Natural killer cell (primary cell): ENCODE measurements at regions of chr2 and their contacts with region 1.

Region 1: DNA sequence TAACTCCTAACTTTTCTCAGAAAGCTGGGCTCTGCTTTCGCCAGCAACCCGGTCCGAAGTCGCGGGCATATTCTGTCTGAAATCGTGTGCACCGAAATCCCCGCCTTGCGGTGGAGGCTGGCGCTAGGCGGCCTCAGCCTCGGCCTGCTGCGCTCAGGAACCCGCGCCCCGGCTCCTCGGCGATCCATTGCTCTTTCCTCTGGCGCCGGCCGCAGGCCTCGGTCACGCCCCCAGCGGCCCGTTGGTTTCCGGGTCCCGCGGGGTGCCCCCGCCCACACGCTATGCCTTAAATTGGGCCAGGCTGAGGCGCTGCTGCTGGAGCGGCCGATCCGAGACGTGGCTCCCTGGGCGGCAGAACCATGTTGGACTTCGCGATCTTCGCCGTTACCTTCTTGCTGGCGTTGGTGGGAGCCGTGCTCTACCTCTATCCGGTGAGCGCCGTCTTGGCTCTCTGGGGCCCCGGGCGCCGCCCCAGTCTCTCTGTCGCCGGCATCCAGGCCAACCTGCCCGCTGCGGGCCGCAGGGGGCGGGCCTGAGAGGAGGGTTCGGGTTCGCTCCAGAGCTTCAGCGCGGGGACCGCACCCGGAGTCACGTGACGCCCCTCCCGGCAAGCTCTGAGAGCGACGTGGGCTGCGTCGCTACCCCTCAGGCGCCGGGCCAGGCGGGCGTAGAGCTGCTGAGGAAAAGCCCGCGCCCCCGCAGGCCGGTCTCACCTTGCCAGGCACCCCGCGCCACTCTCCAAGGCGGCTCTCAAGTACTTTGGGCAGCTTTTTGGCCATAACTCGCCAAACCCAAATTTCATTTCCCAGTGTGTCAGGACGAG is at the start of gene CYP20A1:
- DNase-seq: peak; percentile 97 to 98
- ATAC-seq: peak; percentile 79 to 93 (median 83)
- H3K4me3 ChIP-seq: peak within 1 kb of the TSS; percentile 92
- H3K4me3 Mint-ChIP-seq: peak within 1 kb of the TSS; percentile 100
- H3K27ac ChIP-seq: peak within 1 kb of the TSS; percentile 96
- H3K27ac Mint-ChIP-seq: peak within 1 kb of the TSS; percentile 90 to 100
- H3K4me1 ChIP-seq: peaks cover 19% of the 10 kb centered on the region
- H3K4me1 Mint-ChIP-seq: peaks cover 29 to 41% of the 10 kb centered on the region in 2 donors
- H3K27me3 ChIP-seq: no peaks in the 10 kb centered on the region
- H3K27me3 Mint-ChIP-seq: no peaks in the 10 kb centered on the region
- CTCF ChIP-seq: no peak
- total RNA-seq, gene CYP20A1: 19.8 to 31.9 (median 30.7) TPM

Region 2: DNA sequence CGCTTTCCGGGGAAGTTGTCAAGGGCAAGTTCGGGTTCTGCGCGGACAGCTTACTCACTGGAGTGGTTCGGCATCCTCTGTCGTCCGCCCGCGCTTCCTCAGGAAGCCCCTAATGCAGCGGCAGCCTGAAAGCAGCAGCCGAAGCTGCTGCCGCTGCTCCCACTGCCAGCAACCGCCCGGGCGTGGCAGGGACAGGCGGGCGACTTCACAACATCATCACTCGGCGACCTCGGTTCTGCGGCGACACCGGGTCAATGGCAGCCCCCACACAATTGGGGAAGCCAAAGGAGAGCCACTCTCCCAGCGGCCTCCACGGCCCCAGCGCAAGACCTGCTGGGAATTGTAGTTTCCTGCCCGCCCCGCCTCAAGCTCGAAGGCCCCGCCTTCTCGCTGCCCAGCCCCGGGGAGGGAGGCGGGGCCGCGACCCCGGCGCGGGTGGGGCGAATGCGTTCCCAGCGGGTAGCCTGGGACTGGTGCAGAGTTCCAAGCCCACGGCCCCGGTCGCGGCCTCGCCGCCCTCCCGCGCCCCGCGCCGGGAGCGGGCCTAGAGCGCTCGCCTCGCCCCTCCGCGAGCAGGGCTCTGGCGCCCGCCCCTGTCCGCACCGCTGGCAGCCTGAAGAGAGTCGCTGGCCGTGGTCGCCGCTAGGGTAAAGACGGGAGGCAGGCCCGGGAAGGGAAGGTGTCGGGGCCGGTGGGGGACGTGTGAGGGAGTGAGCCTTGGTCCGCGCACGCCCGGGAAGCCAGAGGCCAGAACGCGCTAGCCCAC is 1787.4 kb before region 1 on chr2 and contains the starts of genes STRADB and TRAK2:
- intact Hi-C with region 1: loop called (anchors 5 kb)
- DNase-seq: peak; percentile 92 to 97
- ATAC-seq: peak; percentile 93 to 98 (median 93)
- H3K4me3 ChIP-seq: peak within 1 kb of the TSS; percentile 65
- H3K4me3 Mint-ChIP-seq: peak within 1 kb of the TSS; percentile 98
- H3K27ac ChIP-seq: peak within 1 kb of the TSS; percentile 72
- H3K27ac Mint-ChIP-seq: peak within 1 kb of the TSS; percentile 95 to 99
- H3K4me1 ChIP-seq: peaks cover 10% of the 10 kb centered on the region
- H3K4me1 Mint-ChIP-seq: peaks cover 29 to 38% of the 10 kb centered on the region in 2 donors
- H3K27me3 ChIP-seq: no peaks in the 10 kb centered on the region
- H3K27me3 Mint-ChIP-seq: no peaks in the 10 kb centered on the region
- CTCF ChIP-seq: peak; percentile 18
- total RNA-seq, gene STRADB: 11.8 to 15.3 (median 14.7) TPM
- total RNA-seq, gene TRAK2: 19.2 to 29.4 (median 26.2) TPM

Region 3: GRCh38 chr2:202375609-202376408 is 863.1 kb before region 1 on chr2 and contains the start of gene BMPR2:
- intact Hi-C with region 1: loop called (anchors 5 kb)
- DNase-seq: peak; percentile 79 to 90
- ATAC-seq: peak; percentile 78 to 84 (median 82)
- H3K4me3 ChIP-seq: peak within 1 kb of the TSS; percentile 72
- H3K4me3 Mint-ChIP-seq: peak within 1 kb of the TSS; percentile 93
- H3K27ac ChIP-seq: peak within 1 kb of the TSS; percentile 49
- H3K27ac Mint-ChIP-seq: peak within 1 kb of the TSS; percentile 72 to 73
- H3K4me1 ChIP-seq: peaks cover 12% of the 10 kb centered on the region
- H3K4me1 Mint-ChIP-seq: peaks cover 39 to 43% of the 10 kb centered on the region in 2 donors
- H3K27me3 ChIP-seq: no peaks in the 10 kb centered on the region
- H3K27me3 Mint-ChIP-seq: no peaks in the 10 kb centered on the region
- CTCF ChIP-seq: no peak
- total RNA-seq, gene BMPR2: 17.8 to 25.5 (median 23.2) TPM

Region 4: DNA sequence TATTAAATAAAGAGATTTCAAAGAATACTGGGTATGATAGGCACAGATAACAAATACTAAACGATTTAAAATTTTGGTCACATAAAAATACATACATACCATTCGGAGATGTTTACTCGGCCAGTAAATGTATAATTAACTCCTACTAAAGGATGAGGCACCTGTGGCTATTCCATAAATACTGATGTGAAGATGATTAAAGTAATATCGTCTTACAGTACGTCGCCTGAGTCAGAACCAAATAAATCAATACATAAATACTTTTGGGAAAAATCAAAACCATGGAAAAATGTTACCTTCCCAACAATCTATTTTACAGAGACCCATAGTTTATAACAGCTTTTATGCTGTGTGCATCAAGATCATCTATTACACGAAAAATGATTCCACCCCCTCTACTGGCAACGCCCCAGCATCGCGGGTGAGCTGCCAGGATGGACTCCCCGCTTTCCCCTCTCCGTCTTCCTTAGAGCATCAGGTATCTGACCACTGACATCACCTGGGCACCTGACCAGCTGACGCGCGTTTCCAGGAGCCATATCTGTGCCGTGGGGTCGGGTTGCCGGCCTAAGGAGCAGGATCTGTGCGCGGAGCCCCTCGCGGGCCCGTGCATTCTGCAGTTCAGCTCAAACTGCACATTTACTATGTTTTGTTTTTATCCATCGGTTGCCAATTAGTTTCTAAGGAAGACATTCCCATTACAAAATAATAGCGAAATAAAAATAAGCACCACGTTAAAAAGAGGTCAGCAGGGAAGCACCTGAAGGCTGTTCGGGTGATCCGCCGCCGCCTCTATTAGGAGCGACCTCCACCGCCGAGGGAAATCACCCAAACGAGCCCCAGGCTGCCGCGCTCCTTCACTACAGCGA is 368.2 kb before region 1 on chr2:
- intact Hi-C with region 1: no loop called
- DNase-seq: peak; percentile 50 to 76
- ATAC-seq: peak; percentile 82 to 89 (median 86)
- H3K4me3 ChIP-seq: peak overlapping the region; percentile 83
- H3K4me3 Mint-ChIP-seq: peak overlapping the region; percentile 91
- H3K27ac ChIP-seq: peak overlapping the region; percentile 74
- H3K27ac Mint-ChIP-seq: peak overlapping the region; percentile 73 to 82
- H3K4me1 ChIP-seq: peaks cover 7% of the 10 kb centered on the region
- H3K4me1 Mint-ChIP-seq: peaks cover 8 to 13% of the 10 kb centered on the region in 2 donors
- H3K27me3 ChIP-seq: no peaks in the 10 kb centered on the region
- H3K27me3 Mint-ChIP-seq: no peaks in the 10 kb centered on the region
- CTCF ChIP-seq: peak; percentile 64

Region 5: GRCh38 chr2:202911512-202912341 is 327.2 kb before region 1 on chr2 and contains the starts of genes CARF and WDR12:
- intact Hi-C with region 1: loop called (anchors 1 kb)
- DNase-seq: peak; percentile 87 to 96
- ATAC-seq: peak; percentile 83 to 95 (median 87)
- H3K4me3 ChIP-seq: peak within 1 kb of the TSS; percentile 83
- H3K4me3 Mint-ChIP-seq: peak within 1 kb of the TSS; percentile 99
- H3K27ac ChIP-seq: peak within 1 kb of the TSS; percentile 80
- H3K27ac Mint-ChIP-seq: peak within 1 kb of the TSS; percentile 94 to 99
- H3K4me1 ChIP-seq: peaks cover 3% of the 10 kb centered on the region
- H3K4me1 Mint-ChIP-seq: peaks cover 13 to 21% of the 10 kb centered on the region in 2 donors
- H3K27me3 ChIP-seq: no peaks in the 10 kb centered on the region
- H3K27me3 Mint-ChIP-seq: no peaks in the 10 kb centered on the region
- CTCF ChIP-seq: no peak
- total RNA-seq, gene CARF: 15.7 to 18.8 (median 16.0) TPM
- total RNA-seq, gene WDR12: 7.8 to 14.5 (median 12.9) TPM

Region 6: GRCh38 chr2:203014456-203015199 is 224.3 kb before region 1 on chr2 and contains the start of gene NBEAL1:
- intact Hi-C with region 1: loop called (anchors 1 kb)
- DNase-seq: peak; percentile 98 to 99
- ATAC-seq: peak; percentile 91 to 96 (median 92)
- H3K4me3 ChIP-seq: peak within 1 kb of the TSS; percentile 84
- H3K4me3 Mint-ChIP-seq: peak within 1 kb of the TSS; percentile 98
- H3K27ac ChIP-seq: peak within 1 kb of the TSS; percentile 90
- H3K27ac Mint-ChIP-seq: peak within 1 kb of the TSS; percentile 97 to 99
- H3K4me1 ChIP-seq: peaks cover 13% of the 10 kb centered on the region
- H3K4me1 Mint-ChIP-seq: peaks cover 29 to 35% of the 10 kb centered on the region in 2 donors
- H3K27me3 ChIP-seq: peaks cover 2% of the 10 kb centered on the region
- H3K27me3 Mint-ChIP-seq: peaks cover 0 to 13% of the 10 kb centered on the region in 2 donors
- CTCF ChIP-seq: no peak
- total RNA-seq, gene NBEAL1: 12.2 to 19.7 (median 12.9) TPM